ENCODE measurements at regions of chr2 and their contacts with region 1.

Region 1: GRCh38 chr2:11129598-11130449 is 25.4 kb upstream of the SLC66A3 start:
- DNase-seq: peak; percentile 76
- CTCF ChIP-seq: peak; percentile 45

Region 2: GRCh38 chr2:10832203-10832936 is 297.5 kb before region 1 on chr2:
- CTCF ChIA-PET with region 1: interaction called, 129 read pairs
- POLR2A ChIA-PET with region 1: no interaction called
- DNase-seq: peak; percentile 89
- CTCF ChIP-seq: peak; percentile 93

Region 3: GRCh38 chr2:11118761-11119160 is 11.1 kb before region 1 on chr2:
- CTCF ChIA-PET with region 1: interaction called, 103 read pairs
- POLR2A ChIA-PET with region 1: no interaction called
- DNase-seq: no peak
- CTCF ChIP-seq: no peak

Region 4: GRCh38 chr2:11152591-11152990 is 22.8 kb after region 1 on chr2:
- CTCF ChIA-PET with region 1: interaction called, 21 read pairs
- POLR2A ChIA-PET with region 1: no interaction called
- DNase-seq: no peak
- CTCF ChIP-seq: no peak

Region 5: DNA sequence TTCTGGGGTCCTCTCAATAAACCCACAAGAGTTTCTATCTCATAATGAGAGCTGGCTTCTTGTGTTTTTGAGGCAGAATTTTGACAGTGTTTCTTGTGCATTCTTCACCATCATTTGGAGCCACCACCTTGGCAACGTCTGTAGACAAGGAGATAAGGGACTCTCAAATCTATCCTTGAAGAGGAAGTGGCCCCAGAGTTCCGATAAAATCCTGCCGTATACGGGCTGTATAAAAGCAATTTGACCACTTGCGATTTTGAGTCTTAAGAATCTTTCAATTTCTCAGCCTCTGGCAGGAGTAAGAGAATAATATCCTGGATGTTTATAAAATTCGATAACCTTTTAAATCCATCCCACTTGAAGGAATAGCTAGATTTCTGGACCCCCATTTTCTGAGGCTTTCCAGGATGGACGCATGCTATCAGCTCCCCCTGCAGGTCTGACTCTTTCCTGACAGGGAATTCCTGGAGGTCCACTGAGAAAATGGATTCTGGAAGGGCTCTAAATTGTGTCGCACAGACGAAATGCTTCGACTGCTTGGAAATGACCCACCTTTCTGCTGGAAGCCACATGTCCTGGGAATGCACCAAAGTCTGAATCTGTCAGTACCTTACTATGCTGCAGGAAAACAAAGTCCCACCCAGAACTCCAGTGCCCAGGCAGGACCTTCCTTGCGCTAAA is 282.1 kb after region 1 on chr2:
- CTCF ChIA-PET with region 1: interaction called, 67 read pairs
- POLR2A ChIA-PET with region 1: no interaction called
- DNase-seq: no peak
- CTCF ChIP-seq: peak; percentile 54

Region 6: GRCh38 chr2:11465497-11466406 is 335.9 kb after region 1 on chr2 and contains the start of gene E2F6:
- CTCF ChIA-PET with region 1: interaction called, 38 read pairs
- POLR2A ChIA-PET with region 1: no interaction called
- DNase-seq: peak; percentile 90
- CTCF ChIP-seq: no peak